ENCODE measurements at regions of chrX and their contacts with region 1.

Region 1: DNA sequence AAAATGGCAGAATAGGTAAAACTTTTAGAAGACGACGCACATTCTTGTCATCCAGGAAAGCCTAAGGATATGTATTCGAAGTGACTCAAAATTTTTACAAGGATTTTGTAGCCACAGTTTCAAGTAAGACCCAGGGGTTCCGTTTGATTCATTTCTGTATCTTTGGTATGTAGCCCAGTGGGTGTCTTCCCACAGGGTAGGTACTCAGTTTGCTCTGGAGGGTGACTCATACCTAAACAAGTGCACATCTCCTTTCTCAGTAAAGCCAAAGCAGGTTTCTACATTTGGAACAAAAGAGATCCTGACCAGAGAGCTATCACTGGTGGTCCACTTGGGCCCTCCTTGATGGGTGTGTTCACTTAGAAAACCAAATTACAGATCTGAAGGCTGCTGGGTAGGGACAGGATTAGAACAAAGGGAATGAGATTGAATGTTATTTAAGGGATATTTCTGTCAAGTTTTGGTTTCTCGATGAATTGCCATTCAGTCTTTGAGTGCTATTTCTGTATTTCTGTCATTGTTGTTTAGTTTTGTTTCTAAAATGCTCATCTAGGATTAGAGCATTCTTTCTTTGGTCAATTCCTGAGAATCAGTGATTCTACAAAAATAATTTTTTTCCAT is 56.1 kb downstream of the PLS3 start:
- DNase-seq: peak; percentile 50 to 98
- H3K4me3 ChIP-seq: no peak overlapping the region
- H3K27ac ChIP-seq: peak overlapping the region; percentile 83
- H3K4me1 ChIP-seq: peaks cover 39% of the 10 kb centered on the region
- H3K27me3 ChIP-seq: no peaks in the 10 kb centered on the region
- CTCF ChIP-seq: no peak

Region 2: GRCh38 chrX:115112411-115112810 is 504.6 kb before region 1 on chrX:
- CTCF ChIA-PET with region 1: no interaction called
- POLR2A ChIA-PET with region 1: interaction called, 10 read pairs
- intact Hi-C with region 1: no loop called
- DNase-seq: no peak
- H3K4me3 ChIP-seq: no peak overlapping the region
- H3K27ac ChIP-seq: no peak overlapping the region
- H3K4me1 ChIP-seq: no peaks in the 10 kb centered on the region
- H3K27me3 ChIP-seq: no peaks in the 10 kb centered on the region
- CTCF ChIP-seq: no peak

Region 3: DNA sequence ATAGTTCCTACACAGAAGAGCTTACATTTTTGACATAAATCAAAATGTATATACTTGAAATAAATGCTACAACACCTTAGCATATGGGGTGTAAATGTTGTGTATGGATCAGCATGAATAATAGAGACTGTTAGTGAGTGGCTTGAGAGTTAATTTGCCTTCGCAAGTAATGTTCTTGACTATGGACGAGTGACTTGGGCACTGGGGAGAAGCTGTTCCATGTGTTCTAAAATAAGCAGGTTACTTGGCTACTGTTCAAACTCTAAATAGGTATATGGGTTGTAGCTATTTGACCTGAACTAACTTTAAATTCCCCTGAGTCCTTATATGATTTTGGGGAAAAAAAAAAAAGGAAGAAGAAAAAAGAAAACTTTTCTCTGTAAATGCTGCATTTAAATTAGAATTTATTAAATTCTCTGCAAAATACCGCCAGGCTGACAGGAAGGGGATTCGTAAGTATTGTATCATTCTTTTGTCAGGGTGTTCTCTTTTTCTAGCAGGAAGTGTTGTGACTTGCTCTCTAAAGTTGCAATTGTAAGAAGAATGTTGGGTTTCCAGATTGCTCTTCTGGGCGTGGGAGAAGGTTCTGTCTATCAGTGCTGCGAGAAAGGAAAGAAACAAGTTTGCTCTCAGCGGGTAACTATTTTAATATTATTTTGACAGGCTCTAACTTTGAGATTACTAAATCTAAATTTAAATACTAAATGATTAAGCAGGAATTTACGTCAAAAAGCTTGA is 23.9 kb before region 1 on chrX:
- CTCF ChIA-PET with region 1: interaction called, 5 read pairs
- POLR2A ChIA-PET with region 1: no interaction called
- intact Hi-C with region 1: loop called (anchors 1 kb)
- DNase-seq: peak in 1 of 2 experiments; percentile 92
- H3K4me3 ChIP-seq: peak overlapping the region; percentile 37; the same call in 1 of the 2 replicates
- H3K27ac ChIP-seq: peak overlapping the region; percentile 84
- H3K4me1 ChIP-seq: peaks cover 43% of the 10 kb centered on the region
- H3K27me3 ChIP-seq: no peaks in the 10 kb centered on the region
- CTCF ChIP-seq: no peak

Region 4: GRCh38 chrX:115602729-115603389 is 14.2 kb before region 1 on chrX:
- CTCF ChIA-PET with region 1: no interaction called
- POLR2A ChIA-PET with region 1: interaction called, 5 read pairs
- intact Hi-C with region 1: loop called (anchors 1 kb)
- DNase-seq: peak in 1 of 2 experiments; percentile 72
- H3K4me3 ChIP-seq: no peak overlapping the region
- H3K27ac ChIP-seq: peak overlapping the region; percentile 61
- H3K4me1 ChIP-seq: peaks cover 27% of the 10 kb centered on the region
- H3K27me3 ChIP-seq: no peaks in the 10 kb centered on the region
- CTCF ChIP-seq: no peak

Measured in PC-9 (cell line).